Natural killer cell (primary cell): ENCODE measurements at regions of chr1 and their contacts with region 1.

Region 1: DNA sequence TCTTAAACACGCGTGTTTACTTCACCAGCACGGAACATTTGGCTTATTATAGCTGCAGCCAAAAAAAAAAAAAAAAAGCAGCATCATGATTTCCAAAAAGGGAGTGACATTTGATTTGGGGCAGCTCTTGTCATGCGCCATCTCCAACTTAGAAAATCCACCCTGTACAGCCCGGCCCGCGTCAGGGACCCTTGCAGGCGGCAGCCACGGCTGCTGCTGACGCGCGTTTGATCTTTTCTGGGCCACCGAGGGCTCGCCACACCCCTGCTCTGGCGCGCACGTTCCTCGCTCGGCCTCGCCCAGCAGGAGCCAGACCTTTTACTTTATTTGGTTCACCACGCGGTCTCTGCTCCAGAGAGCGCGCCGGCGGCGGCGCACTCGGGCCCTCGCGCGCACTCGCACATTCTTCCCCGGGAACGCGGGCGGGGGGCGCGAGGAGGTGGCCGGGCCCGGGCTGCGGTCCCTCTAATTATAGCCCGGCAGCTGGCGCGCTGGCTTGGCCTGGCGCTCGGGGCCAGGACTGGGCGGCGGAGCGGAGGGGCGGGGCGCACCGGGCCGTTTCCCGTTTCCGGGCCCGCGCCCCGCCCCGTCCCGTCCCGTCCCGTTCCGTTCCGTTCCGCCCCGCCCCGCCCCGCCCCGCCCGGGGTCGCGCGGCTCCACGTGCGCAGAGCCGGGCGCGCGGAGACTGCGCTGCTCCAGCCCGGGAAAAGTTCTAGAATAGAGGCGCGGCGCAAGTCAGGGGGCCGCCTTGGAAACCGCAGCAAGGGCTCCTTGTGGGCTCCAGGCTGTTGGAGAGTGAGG is 10.2 kb downstream of the IRF2BP2 start:
- DNase-seq: peak; percentile 61 to 90
- ATAC-seq: peak; percentile 68 to 87 (median 79)
- H3K4me3 ChIP-seq: peak overlapping the region; percentile 48
- H3K4me3 Mint-ChIP-seq: peak overlapping the region; percentile 87
- H3K27ac ChIP-seq: peak overlapping the region; percentile 95
- H3K27ac Mint-ChIP-seq: peak overlapping the region; percentile 97 to 99
- H3K4me1 ChIP-seq: peaks cover 33% of the 10 kb centered on the region
- H3K4me1 Mint-ChIP-seq: peaks cover 46 to 48% of the 10 kb centered on the region in 2 donors
- H3K27me3 ChIP-seq: no peaks in the 10 kb centered on the region
- H3K27me3 Mint-ChIP-seq: no peaks in the 10 kb centered on the region
- CTCF ChIP-seq: no peak

Region 2: GRCh38 chr1:234499119-234499942 is 100.5 kb before region 1 on chr1:
- intact Hi-C with region 1: loop called (anchors 2 kb)
- DNase-seq: peak; percentile 75 to 88
- ATAC-seq: peak; percentile 92 to 99 (median 99)
- H3K4me3 ChIP-seq: no peak overlapping the region
- H3K4me3 Mint-ChIP-seq: no peak overlapping the region
- H3K27ac ChIP-seq: no peak overlapping the region
- H3K27ac Mint-ChIP-seq: no peak overlapping the region
- H3K4me1 ChIP-seq: peaks cover 11% of the 10 kb centered on the region
- H3K4me1 Mint-ChIP-seq: peaks cover 6 to 9% of the 10 kb centered on the region in 2 donors
- H3K27me3 ChIP-seq: no peaks in the 10 kb centered on the region
- H3K27me3 Mint-ChIP-seq: peaks cover 2 to 19% of the 10 kb centered on the region in 2 donors
- CTCF ChIP-seq: peak; percentile 87

Region 3: DNA sequence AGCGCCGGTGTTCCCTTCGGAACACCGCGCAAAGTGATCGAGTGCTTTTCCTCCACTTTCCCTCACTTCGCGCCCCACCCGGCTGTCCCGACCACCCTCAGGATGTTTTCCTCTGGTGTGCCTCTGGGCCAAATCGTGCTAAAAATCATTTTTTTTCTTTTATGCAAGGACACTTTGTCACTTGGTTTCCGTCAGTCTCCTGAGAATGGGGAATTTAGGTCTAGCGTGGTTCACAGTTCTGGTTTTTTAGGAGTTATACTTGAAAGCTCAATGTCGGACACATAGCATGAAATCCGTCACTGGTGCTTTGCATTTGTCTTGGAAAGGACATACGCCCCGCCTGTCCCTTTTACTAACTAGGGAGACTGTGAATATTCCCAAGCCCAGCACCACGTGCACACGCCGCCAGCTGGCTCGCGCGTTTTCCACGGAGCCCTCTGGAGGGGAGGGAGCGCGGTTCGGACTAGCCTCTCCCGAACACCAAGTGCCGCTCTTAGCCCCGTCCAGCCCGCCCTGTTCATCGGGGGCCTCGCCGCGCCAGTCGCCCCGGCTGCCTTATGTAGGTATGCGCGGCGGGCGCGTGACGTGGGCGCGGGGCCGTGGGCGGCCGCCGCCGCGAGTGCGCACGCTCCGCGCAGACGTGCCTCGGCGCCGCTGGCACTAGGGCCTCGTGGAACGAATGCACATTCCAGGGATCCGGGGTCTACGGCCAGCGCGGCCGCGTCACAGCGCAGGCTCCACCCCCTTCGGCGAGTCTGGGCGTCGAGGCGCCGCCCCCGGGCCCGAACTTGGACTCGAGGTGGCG is 10.7 kb after region 1 on chr1:
- intact Hi-C with region 1: loop called (anchors 1 kb)
- DNase-seq: peak; percentile 89 to 97
- ATAC-seq: peak; percentile 51 to 77 (median 64)
- H3K4me3 ChIP-seq: peak overlapping the region; percentile 92
- H3K4me3 Mint-ChIP-seq: peak overlapping the region; percentile 94
- H3K27ac ChIP-seq: peak overlapping the region; percentile 99
- H3K27ac Mint-ChIP-seq: peak overlapping the region; percentile 96 to 98
- H3K4me1 ChIP-seq: peaks cover 53% of the 10 kb centered on the region
- H3K4me1 Mint-ChIP-seq: peaks cover 59 to 60% of the 10 kb centered on the region in 2 donors
- H3K27me3 ChIP-seq: no peaks in the 10 kb centered on the region
- H3K27me3 Mint-ChIP-seq: no peaks in the 10 kb centered on the region
- CTCF ChIP-seq: no peak

Region 4: GRCh38 chr1:234724516-234725176 is 124.8 kb after region 1 on chr1:
- intact Hi-C with region 1: loop called (anchors 1 kb)
- DNase-seq: peak in 1 of 2 donors; percentile 60
- ATAC-seq: peak in 2 of 3 donors; percentile 27 to 30
- H3K4me3 ChIP-seq: peak overlapping the region; percentile 18
- H3K4me3 Mint-ChIP-seq: peak overlapping the region; percentile 87
- H3K27ac ChIP-seq: peak overlapping the region; percentile 90
- H3K27ac Mint-ChIP-seq: peak overlapping the region; percentile 91
- H3K4me1 ChIP-seq: peaks cover 52% of the 10 kb centered on the region
- H3K4me1 Mint-ChIP-seq: peaks cover 24 to 39% of the 10 kb centered on the region in 2 donors
- H3K27me3 ChIP-seq: no peaks in the 10 kb centered on the region
- H3K27me3 Mint-ChIP-seq: no peaks in the 10 kb centered on the region
- CTCF ChIP-seq: no peak